ENCODE measurements at regions of chr10 and their contacts with region 1.

Region 1: DNA sequence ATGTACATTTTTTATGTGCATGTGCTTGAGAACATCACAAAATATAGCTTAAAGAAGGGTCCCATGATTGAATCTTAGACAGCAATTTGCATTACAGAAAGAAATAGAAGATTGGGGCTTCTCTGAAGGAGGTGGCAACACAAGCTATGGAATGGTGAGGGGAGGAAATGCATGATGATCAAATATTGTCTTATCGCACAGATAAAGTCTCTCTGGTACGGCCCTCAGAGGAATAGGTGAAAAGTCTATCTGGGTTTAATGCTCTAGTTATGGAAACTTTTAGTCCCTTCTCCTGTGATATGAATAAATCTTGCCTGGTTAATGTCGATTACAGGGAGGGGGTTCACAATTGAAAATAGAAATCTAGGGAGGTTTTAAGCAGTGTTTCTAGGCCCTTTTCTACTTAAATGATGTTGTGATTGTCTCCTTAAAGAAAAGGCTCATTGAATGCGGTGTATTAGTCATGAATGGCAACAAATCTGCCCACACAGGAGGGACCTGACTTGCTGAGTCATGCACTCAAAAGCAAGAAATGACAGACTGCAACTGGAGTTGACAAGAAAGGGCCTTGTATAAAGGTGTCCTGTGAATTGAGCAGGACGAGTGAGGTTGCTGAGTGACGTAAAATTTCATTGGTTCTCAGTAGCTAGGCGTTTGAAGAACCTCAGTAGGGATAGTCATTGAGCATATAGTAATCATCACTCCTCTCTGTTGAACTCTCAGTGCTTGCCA is 133.4 kb upstream of the CSTF2T start:
- DNase-seq: no peak
- H3K4me3 Mint-ChIP-seq: no peak overlapping the region
- H3K27ac Mint-ChIP-seq: no peak overlapping the region
- H3K4me1 Mint-ChIP-seq: peaks cover 3% of the 10 kb centered on the region
- H3K27me3 Mint-ChIP-seq: peaks cover 4% of the 10 kb centered on the region

Region 2: DNA sequence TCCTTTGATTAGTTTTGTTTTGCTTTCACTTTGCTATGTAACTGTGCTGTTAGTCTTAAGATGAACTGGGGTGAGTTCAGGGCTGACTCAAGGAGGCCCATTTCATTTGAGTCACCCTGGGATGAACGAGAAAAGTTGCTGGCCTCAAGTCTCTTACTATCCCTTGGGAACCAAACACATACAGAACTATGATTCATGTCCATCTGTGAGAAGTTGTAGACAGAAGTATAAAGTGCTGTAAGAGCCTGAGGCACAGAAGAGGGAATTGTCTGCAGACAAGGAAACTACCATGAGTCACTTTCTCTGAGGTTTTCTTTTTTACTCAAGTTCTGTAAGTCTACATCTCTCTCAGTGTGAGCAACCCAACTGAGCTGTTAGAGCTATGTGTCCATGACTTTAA is 46.4 kb after region 1 on chr10:
- intact Hi-C with region 1: loop called (anchors 2 kb)
- DNase-seq: peak; percentile 76
- H3K4me3 Mint-ChIP-seq: peak overlapping the region; percentile 65
- H3K27ac Mint-ChIP-seq: peak overlapping the region; percentile 78
- H3K4me1 Mint-ChIP-seq: peaks cover 11% of the 10 kb centered on the region
- H3K27me3 Mint-ChIP-seq: peaks cover 8% of the 10 kb centered on the region

Region 3: DNA sequence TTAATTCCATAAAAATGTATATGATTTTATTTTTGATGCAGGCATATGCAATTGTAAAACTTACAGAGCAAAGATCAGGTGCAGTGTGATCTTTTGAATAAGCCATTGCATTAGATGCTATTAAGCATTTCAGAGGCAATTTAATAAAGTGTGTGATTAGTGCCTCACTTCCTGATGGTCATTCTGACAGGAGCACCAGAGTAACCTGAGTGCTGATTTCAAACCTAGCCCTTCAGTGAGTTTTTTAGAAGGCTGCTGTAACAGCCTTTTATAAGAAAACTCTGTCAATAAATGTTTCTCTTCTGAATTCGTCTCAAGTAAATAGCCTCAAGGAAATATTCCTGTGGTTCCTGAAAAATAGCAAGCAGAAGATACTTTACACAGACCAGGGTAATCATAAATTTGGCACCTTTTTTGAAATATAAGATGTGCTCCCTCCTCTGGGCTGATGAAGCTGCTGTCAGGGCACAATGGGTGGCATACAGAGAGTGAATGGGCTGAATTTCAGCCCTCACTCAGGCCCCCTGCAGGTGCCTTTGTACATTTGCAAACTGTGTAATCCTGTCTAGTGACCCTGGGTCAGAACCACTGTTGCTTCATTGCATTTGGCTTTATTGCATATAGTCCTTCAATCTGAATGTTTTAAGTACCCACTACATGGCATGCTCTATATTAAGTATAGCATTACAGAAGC is 60.3 kb after region 1 on chr10:
- intact Hi-C with region 1: no loop called
- DNase-seq: peak; percentile 68
- H3K4me3 Mint-ChIP-seq: no peak overlapping the region
- H3K27ac Mint-ChIP-seq: no peak overlapping the region
- H3K4me1 Mint-ChIP-seq: no peaks in the 10 kb centered on the region
- H3K27me3 Mint-ChIP-seq: peaks cover 7% of the 10 kb centered on the region

Measured in activated CD4-positive, alpha-beta T cell treated with anti-CD3 and anti-CD28 coated beads, Interleukin-2, amount 10 ng/mL, durations not matched to agents 24 days and 14 days (primary cell).